Activated CD4-positive, alpha-beta T cell treated with anti-CD3 and anti-CD28 coated beads for 36 hours (primary cell): ENCODE measurements at regions of chr13 and their contacts with region 1.

Region 1: GRCh38 chr13:40777166-40777808 is 6.3 kb upstream of the MRPS31 start:
- DNase-seq: peak; percentile 57
- ATAC-seq: peak; percentile 49
- H3K4me3 Mint-ChIP-seq: peak overlapping the region; percentile 52
- H3K27ac Mint-ChIP-seq: peak overlapping the region; percentile 98
- H3K4me1 Mint-ChIP-seq: peaks cover 29% of the 10 kb centered on the region
- H3K27me3 Mint-ChIP-seq: no peaks in the 10 kb centered on the region

Region 2: DNA sequence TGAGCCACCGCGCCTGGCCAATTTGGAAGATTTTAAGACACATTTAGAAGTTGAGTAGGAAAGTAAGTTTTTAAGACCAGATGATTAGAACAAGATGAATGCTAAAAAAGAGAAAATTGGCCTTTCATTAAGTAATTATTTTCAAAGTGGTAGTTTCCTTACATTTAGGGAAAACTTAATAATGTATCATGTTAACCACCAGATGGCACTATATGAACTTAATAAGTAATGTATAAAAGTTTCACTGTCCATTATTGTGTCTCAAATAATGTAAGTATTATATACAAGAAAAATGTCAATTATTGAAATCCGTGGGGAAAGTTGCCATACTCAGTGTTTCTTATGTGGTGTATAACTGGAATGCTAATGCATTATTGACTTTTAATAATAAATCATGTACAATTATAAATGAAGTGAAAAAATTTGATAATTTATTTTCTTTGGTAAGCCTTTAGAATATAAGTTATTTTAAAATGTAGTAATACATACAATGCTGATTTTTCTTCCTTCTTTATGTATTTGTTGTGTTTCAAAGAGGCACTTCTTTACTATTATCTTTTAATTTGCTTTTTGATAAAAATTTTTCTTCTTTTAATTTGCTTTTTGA is 1092.7 kb before region 1 on chr13:
- CTCF ChIA-PET with region 1: no interaction called
- POLR2A ChIA-PET with region 1: no interaction called
- intact Hi-C with region 1: loop called (anchors 5 kb)
- DNase-seq: no peak
- ATAC-seq: no peak
- H3K4me3 Mint-ChIP-seq: no peak overlapping the region
- H3K27ac Mint-ChIP-seq: no peak overlapping the region
- H3K4me1 Mint-ChIP-seq: peaks cover 21% of the 10 kb centered on the region
- H3K27me3 Mint-ChIP-seq: no peaks in the 10 kb centered on the region

Region 3: DNA sequence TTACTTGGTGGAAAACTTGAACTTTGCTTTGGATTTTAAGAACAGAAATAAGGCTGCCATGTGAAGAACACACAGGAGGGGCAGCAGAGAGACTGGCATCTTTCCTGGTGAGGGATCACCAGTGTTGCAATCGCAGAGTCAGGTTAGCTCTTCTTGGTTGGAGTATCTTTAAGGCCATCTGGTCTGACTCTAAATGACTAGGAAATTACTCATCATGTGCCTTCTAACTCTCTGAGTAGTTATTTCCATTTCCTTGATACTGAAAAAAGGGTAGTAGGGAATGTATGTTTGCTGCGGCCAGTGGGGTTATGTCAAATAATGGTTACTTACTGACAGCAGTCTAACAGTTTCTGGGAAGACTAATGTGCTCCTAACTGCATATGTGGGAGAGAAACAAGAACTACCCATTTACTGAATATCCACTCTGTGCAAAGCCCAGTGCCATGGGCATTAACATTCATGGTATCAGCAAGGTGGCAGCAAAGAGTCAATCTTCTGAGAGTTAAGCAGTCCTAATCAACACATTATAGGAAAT is 999.7 kb before region 1 on chr13:
- CTCF ChIA-PET with region 1: no interaction called
- POLR2A ChIA-PET with region 1: no interaction called
- intact Hi-C with region 1: loop called in 1 of 2 experiments (anchors 2 kb)
- DNase-seq: peak; percentile 70
- ATAC-seq: peak; percentile 83
- H3K4me3 Mint-ChIP-seq: peak overlapping the region; percentile 5
- H3K27ac Mint-ChIP-seq: peak overlapping the region; percentile 96
- H3K4me1 Mint-ChIP-seq: peaks cover 54% of the 10 kb centered on the region
- H3K27me3 Mint-ChIP-seq: no peaks in the 10 kb centered on the region

Region 4: DNA sequence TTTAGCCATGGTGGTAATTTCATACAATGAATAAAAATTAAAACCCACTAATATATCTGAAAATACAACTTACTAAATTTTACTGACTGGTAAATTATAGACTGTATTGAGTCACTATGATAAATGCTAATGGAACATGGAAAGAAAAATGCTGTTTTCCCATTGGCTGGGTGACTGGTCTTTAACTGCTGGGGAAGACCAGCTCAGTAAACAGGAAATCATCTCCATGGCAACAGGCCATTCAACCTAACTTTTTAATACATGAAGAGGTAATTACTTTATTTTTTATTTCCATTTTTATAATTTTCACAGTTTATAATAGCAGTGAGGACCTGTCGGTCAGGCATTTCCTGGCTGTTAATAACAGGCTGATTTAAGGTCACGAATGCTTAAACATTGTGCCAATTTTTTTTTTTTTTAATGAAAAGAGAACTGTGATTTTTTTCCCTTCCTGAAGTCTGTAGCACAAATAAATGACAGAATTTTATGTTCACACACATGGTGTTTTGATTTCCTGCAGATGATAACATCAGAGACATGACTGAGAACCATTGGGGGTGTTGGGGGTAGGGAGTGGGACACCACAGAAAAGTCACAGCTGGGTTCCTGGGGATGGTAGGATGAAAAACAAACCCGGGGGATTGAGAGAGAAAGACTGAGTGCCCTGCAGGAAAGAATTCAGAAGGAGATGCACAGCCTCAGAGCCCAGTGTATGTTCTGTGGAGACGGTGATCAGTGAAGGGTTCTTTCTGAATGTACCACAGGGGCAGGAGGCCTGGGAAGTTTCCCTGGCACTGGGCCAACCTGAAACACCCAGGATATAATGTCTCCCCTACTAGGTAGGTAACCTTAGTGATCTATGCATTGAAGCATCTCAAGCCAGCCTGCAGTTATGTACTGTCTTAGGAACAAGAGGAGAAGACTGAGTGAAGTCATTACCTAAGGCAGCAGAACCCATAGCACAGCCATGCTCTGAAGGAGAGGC is 824.7 kb before region 1 on chr13:
- CTCF ChIA-PET with region 1: no interaction called
- POLR2A ChIA-PET with region 1: no interaction called
- intact Hi-C with region 1: loop called in 1 of 2 experiments (anchors 5 kb)
- DNase-seq: peak; percentile 15
- ATAC-seq: no peak
- H3K4me3 Mint-ChIP-seq: no peak overlapping the region
- H3K27ac Mint-ChIP-seq: no peak overlapping the region
- H3K4me1 Mint-ChIP-seq: peaks cover 49% of the 10 kb centered on the region
- H3K27me3 Mint-ChIP-seq: no peaks in the 10 kb centered on the region

Region 5: DNA sequence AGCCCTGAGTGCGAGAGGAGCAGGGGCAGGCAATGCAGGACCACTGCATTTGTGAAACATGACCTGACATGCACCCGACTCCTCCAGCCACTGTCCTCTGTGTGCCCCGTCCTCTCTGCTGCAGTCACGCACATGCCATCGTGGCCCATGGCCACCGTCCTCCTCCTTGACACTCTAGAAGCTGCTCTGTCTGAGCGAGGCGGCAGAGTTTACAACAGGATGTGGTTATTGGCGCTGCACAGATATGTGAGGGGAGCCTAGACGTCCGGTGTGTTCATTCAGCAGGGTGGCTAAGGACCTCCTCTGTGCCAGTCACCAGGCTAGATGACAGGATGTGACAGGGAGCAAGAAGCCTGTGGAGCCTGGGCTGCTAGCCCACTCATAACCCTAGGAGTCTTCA is 388.7 kb before region 1 on chr13:
- CTCF ChIA-PET with region 1: no interaction called
- POLR2A ChIA-PET with region 1: no interaction called
- intact Hi-C with region 1: loop called in 1 of 2 experiments (anchors 5 kb)
- DNase-seq: peak; percentile 89
- ATAC-seq: peak; percentile 98
- H3K4me3 Mint-ChIP-seq: peak overlapping the region; percentile 71
- H3K27ac Mint-ChIP-seq: peak overlapping the region; percentile 95
- H3K4me1 Mint-ChIP-seq: peaks cover 44% of the 10 kb centered on the region
- H3K27me3 Mint-ChIP-seq: no peaks in the 10 kb centered on the region

Region 6: DNA sequence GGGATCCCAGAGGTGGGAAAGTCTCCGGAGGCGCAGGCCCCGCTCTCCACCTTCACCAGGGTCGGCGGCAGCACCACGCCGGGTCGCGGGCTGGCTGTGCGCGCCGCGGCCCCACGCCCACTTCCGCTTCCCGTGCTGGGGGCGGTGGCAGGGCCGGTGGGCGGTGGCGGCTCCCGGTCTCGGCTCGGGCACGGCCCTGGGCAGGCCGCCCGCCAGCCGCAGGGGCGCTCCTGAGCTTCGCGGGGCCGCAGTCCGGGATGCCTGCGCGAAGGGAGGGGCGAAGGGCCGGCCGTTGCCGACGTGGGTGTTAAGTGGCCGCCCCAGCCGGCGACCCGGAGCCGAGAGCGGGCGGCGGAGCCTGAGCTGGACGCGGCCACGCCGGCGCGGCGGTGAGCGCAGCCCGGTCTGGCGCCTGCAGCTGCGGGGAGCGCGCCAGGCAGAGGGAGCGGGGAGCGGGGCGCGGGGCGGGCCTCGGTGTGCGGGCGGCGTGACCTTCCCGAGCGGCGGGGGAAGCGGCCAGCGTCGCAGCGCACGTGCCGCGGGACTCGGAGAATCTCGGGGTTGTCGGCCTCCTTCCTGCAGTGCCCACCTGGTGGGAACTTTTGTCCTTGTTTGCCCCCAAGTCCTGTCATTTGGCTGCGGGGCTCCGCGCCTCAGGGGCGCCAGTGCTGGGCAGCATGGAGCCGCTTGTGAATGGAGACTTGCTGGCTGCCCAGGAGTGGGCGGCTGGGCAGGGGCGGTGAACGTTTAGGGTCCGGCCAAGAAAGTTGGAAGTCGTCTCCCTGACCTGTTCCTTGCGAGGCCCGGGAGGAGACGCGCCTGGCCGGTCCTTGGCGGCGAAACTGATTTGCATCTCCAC is 12.2 kb after region 1 on chr13 and contains the start of gene SLC25A15:
- CTCF ChIA-PET with region 1: interaction called, 21 read pairs
- POLR2A ChIA-PET with region 1: no interaction called
- intact Hi-C with region 1: no loop called
- DNase-seq: peak; percentile 79
- ATAC-seq: peak; percentile 79
- H3K4me3 Mint-ChIP-seq: peak within 1 kb of the TSS; percentile 82
- H3K27ac Mint-ChIP-seq: peak within 1 kb of the TSS; percentile 83
- H3K4me1 Mint-ChIP-seq: peaks cover 27% of the 10 kb centered on the region
- H3K27me3 Mint-ChIP-seq: no peaks in the 10 kb centered on the region
- total RNA-seq, gene SLC25A15: 20.5 to 23.6 TPM